ENCODE measurements at regions of chr1 and their contacts with region 1.

Region 1: GRCh38 chr1:248837794-248838356 is at the start of gene ZNF672:
- DNase-seq: peak; percentile 98
- ATAC-seq: peak; percentile 85
- H3K4me3 Mint-ChIP-seq: no peak within 1 kb of the TSS
- H3K27ac Mint-ChIP-seq: peak within 1 kb of the TSS; percentile 99
- H3K4me1 Mint-ChIP-seq: peaks cover 4% of the 10 kb centered on the region
- H3K27me3 Mint-ChIP-seq: no peaks in the 10 kb centered on the region; the same call in 1 of the 2 replicates
- CTCF ChIP-seq: no peak
- total RNA-seq, gene ZNF672: 34.1 to 37.9 TPM (median 34.6 TPM) in 3 replicates

Region 2: DNA sequence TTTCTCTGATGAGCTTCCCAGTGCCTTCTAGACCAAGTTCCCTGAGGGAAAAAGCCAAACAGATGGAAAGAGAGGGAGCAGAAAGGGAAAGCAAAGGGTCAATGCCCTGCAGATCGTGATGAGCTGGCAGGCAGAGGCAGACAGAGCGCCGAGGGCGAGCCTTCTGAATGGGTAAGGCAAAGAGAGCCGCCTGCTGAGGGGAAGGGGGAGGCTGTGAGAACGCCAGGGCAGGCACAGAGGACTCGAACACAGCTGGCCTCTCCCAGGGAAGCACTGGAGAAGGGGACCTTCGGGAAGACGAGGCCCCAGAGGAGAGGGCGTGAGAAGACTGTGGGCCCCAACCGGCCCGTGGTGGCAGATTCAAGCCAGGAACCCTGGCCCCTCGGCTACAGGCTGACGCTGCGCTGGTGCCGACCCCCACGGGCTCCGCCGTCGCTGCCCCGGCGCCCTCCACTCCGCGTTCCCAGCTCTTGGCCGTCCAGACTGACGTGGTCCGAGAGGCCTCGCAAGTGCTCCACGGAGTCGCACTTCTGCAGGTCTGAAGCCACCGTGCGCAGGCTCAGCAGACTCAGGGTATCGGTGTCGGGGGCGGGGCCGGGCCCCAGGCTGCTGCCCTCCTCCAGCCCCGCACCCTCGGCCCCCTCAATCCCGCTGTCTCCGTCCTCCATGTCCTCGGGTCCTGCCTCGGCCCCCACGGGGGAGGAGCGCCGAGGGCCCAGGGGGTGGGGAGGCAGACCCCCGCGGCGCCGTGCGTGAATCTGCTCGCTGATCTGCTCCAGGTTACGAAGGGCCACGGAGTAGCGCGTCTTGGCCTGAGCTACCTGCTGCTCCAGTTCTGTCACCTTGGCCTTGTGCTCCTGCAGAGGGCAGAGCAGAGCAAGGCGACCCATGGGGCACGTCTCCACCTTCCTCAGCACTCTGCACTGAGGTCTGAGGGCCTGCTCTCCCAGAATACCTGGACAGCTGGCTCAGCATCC is 26.1 kb before region 1 on chr1:
- CTCF ChIA-PET with region 1: interaction called, 10 read pairs
- POLR2A ChIA-PET with region 1: no interaction called
- DNase-seq: peak; percentile 36
- ATAC-seq: peak; percentile 90
- H3K4me3 Mint-ChIP-seq: no peak overlapping the region
- H3K27ac Mint-ChIP-seq: no peak overlapping the region
- H3K4me1 Mint-ChIP-seq: peaks cover 14% of the 10 kb centered on the region
- H3K27me3 Mint-ChIP-seq: no peaks in the 10 kb centered on the region
- CTCF ChIP-seq: no peak

Region 3: GRCh38 chr1:248825909-248826760 is 11.7 kb before region 1 on chr1 and contains the start of gene SH3BP5L:
- CTCF ChIA-PET with region 1: interaction called, 53 read pairs
- POLR2A ChIA-PET with region 1: interaction called, 35 read pairs
- DNase-seq: peak; percentile 85
- ATAC-seq: peak; percentile 91
- H3K4me3 Mint-ChIP-seq: peak within 1 kb of the TSS; percentile 99
- H3K27ac Mint-ChIP-seq: peak within 1 kb of the TSS; percentile 100
- H3K4me1 Mint-ChIP-seq: peaks cover 16% of the 10 kb centered on the region
- H3K27me3 Mint-ChIP-seq: no peaks in the 10 kb centered on the region; the same call in 1 of the 2 replicates
- CTCF ChIP-seq: no peak; the same call in 1 of the 2 replicates
- total RNA-seq, gene SH3BP5L: 28.3 to 32.9 TPM (median 28.3 TPM) in 3 replicates

Region 4: GRCh38 chr1:248850536-248851439 is 12.9 kb after region 1 on chr1:
- CTCF ChIA-PET with region 1: interaction called, 13 read pairs
- POLR2A ChIA-PET with region 1: no interaction called
- DNase-seq: no peak
- ATAC-seq: no peak
- H3K4me3 Mint-ChIP-seq: no peak overlapping the region
- H3K27ac Mint-ChIP-seq: no peak overlapping the region
- H3K4me1 Mint-ChIP-seq: no peaks in the 10 kb centered on the region
- H3K27me3 Mint-ChIP-seq: no peaks in the 10 kb centered on the region
- CTCF ChIP-seq: no peak

Region 5: GRCh38 chr1:248858891-248859889 is 21.3 kb after region 1 on chr1 and contains the start of gene ZNF692:
- CTCF ChIA-PET with region 1: interaction called, 29 read pairs
- POLR2A ChIA-PET with region 1: interaction called, 18 read pairs
- DNase-seq: peak; percentile 95
- ATAC-seq: peak; percentile 73
- H3K4me3 Mint-ChIP-seq: peak within 1 kb of the TSS; percentile 88
- H3K27ac Mint-ChIP-seq: peak within 1 kb of the TSS; percentile 95
- H3K4me1 Mint-ChIP-seq: peaks cover 26% of the 10 kb centered on the region
- H3K27me3 Mint-ChIP-seq: peaks cover 36% of the 10 kb centered on the region
- CTCF ChIP-seq: no peak
- total RNA-seq, gene ZNF692: 50.7 to 59.1 TPM (median 56.0 TPM) in 3 replicates

Region 6: DNA sequence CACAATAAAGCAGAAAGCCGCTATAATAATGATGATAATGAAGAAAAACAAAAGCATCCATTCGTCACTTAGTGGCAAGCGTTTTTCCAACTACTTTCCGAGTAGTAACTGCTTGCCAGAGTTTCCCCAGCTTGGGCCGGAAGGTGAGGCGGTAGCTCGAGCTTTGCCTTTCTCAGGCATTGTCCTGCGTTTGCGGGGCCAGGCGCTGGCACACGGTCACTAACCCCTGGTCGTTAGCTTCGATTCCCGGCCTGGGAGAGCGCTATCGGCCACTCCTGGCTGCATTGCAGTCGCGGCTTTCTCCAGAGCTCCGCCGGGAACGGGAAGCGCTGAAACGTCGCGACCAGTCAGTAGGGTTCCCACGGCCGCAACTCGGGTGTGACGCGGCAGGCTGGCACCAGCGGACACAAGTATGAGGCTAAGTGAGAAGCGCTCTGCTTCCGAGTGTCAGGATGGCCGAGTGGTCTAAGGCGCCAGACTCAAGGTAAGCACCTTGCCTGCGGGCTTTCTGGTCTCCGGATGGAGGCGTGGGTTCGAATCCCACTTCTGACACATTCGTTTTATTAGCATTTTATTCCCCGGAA is 35.6 kb after region 1 on chr1:
- CTCF ChIA-PET with region 1: interaction called, 6 read pairs
- POLR2A ChIA-PET with region 1: interaction called, 17 read pairs
- DNase-seq: peak; percentile 97
- ATAC-seq: peak; percentile 76
- H3K4me3 Mint-ChIP-seq: peak overlapping the region; percentile 96
- H3K27ac Mint-ChIP-seq: peak overlapping the region; percentile 99
- H3K4me1 Mint-ChIP-seq: peaks cover 3% of the 10 kb centered on the region; the same call in 1 of the 2 replicates
- H3K27me3 Mint-ChIP-seq: peaks cover 8% of the 10 kb centered on the region
- CTCF ChIP-seq: no peak

Measured in WTC11 (cell line).